Naive thymus-derived CD4-positive, alpha-beta T cell (primary cell): ENCODE measurements at regions of chr20 and their contacts with region 1.

Region 1: GRCh38 chr20:38472513-38473372 is at the start of gene RALGAPB:
- DNase-seq: peak; percentile 96 to 99 (median 98)
- ATAC-seq: peak; percentile 95
- H3K4me3 ChIP-seq: peak within 1 kb of the TSS; percentile 57
- H3K4me3 Mint-ChIP-seq: peak within 1 kb of the TSS; percentile 87 to 94 (median 92)
- H3K27ac ChIP-seq: peak within 1 kb of the TSS; percentile 80
- H3K27ac Mint-ChIP-seq: peak within 1 kb of the TSS; percentile 87 to 97 (median 94)
- H3K4me1 ChIP-seq: peaks cover 21 to 24% of the 10 kb centered on the region in 2 donors
- H3K4me1 Mint-ChIP-seq: peaks cover 37 to 57% (median 52%) of the 10 kb centered on the region in 7 donors
- H3K27me3 ChIP-seq: no peaks in the 10 kb centered on the region
- H3K27me3 Mint-ChIP-seq: peaks cover 0 to 14% (median 0%) of the 10 kb centered on the region in 5 donors
- total RNA-seq, gene RALGAPB: 36.8 to 50.4 (median 41.8) TPM

Region 2: GRCh38 chr20:38446441-38447209 is 26.1 kb before region 1 on chr20:
- CTCF ChIA-PET with region 1: interaction called, 18 read pairs
- POLR2A ChIA-PET with region 1: interaction called, 48 read pairs
- intact Hi-C with region 1: loop called (anchors 1 kb)
- DNase-seq: peak; percentile 83 to 96 (median 90)
- ATAC-seq: peak; percentile 100
- H3K4me3 ChIP-seq: peak overlapping the region; percentile 94
- H3K4me3 Mint-ChIP-seq: peak overlapping the region; percentile 82 to 94 (median 86)
- H3K27ac ChIP-seq: peak overlapping the region; percentile 81
- H3K27ac Mint-ChIP-seq: peak overlapping the region; percentile 83 to 96 (median 90)
- H3K4me1 ChIP-seq: peaks cover 10 to 11% of the 10 kb centered on the region in 2 donors
- H3K4me1 Mint-ChIP-seq: peaks cover 7 to 33% (median 24%) of the 10 kb centered on the region in 7 donors
- H3K27me3 ChIP-seq: no peaks in the 10 kb centered on the region
- H3K27me3 Mint-ChIP-seq: peaks cover 0 to 12% (median 0%) of the 10 kb centered on the region in 5 donors